Breast epithelium (tissue), 4 donors: ENCODE measurements at regions of chr7 and their contacts with region 1.

Region 1: GRCh38 chr7:158903897-158904541 is 47.7 kb downstream of the DYNC2I1 start:
- DNase-seq: no peak
- H3K4me3 ChIP-seq: no peak overlapping the region
- H3K27ac ChIP-seq: no peak overlapping the region
- H3K4me1 ChIP-seq: no peaks in the 10 kb centered on the region
- H3K27me3 ChIP-seq: no peaks in the 10 kb centered on the region
- CTCF ChIP-seq: no peak
- POLR2A ChIP-seq: no peak

Region 2: DNA sequence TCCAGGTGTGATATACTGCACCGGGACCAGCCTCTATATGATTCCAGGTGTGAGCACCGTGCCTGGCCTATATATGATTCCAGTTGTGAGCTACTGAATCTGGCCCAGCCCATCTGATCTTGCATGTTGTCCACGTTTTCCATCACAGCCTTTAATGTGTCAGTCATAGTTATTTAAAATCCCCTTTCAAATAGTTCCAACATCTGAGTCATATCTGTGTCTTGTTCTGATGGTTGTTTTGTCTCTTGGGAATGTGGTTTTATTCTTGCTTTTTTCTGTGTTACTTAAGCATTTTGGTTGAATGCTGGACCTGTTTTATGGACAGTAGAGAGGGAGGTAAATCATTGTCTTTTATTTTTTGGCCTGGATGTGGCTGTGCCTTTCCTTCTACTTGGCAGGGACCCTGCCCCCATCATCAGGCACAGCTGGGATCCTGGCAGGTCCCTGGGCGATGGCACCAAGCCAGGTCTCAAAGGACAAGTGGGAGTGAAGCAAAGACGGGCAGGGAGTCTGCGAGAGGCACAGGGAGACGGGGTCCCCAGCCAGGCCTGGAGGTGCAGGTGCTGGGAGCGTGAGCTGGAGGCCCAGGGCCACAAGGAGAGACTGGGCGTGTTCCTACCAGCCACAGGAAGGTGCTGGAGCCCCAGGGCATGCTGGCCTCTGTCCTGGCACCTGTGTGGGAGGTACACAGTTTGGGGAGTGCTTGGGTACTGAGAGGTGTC is 47.1 kb after region 1 on chr7:
- intact Hi-C with region 1: no loop called
- DNase-seq: no peak
- H3K4me3 ChIP-seq: no peak overlapping the region
- H3K27ac ChIP-seq: no peak overlapping the region
- H3K4me1 ChIP-seq: no peaks in the 10 kb centered on the region
- H3K27me3 ChIP-seq: no peaks in the 10 kb centered on the region
- CTCF ChIP-seq: no peak
- POLR2A ChIP-seq: no peak

Region 3: GRCh38 chr7:158976849-158977593 is 73.0 kb after region 1 on chr7:
- intact Hi-C with region 1: loop called (anchors 10 kb)
- DNase-seq: peak; percentile 86 to 87
- H3K4me3 ChIP-seq: peak overlapping the region; percentile 33 to 62 (median 34)
- H3K27ac ChIP-seq: no peak overlapping the region
- H3K4me1 ChIP-seq: no peaks in the 10 kb centered on the region
- H3K27me3 ChIP-seq: no peaks in the 10 kb centered on the region
- CTCF ChIP-seq: peak; percentile 76 to 86 (median 80)
- POLR2A ChIP-seq: no peak